CD8-positive, alpha-beta T cell (primary cell): ENCODE measurements at regions of chr3 and their contacts with region 1.

Region 1: DNA sequence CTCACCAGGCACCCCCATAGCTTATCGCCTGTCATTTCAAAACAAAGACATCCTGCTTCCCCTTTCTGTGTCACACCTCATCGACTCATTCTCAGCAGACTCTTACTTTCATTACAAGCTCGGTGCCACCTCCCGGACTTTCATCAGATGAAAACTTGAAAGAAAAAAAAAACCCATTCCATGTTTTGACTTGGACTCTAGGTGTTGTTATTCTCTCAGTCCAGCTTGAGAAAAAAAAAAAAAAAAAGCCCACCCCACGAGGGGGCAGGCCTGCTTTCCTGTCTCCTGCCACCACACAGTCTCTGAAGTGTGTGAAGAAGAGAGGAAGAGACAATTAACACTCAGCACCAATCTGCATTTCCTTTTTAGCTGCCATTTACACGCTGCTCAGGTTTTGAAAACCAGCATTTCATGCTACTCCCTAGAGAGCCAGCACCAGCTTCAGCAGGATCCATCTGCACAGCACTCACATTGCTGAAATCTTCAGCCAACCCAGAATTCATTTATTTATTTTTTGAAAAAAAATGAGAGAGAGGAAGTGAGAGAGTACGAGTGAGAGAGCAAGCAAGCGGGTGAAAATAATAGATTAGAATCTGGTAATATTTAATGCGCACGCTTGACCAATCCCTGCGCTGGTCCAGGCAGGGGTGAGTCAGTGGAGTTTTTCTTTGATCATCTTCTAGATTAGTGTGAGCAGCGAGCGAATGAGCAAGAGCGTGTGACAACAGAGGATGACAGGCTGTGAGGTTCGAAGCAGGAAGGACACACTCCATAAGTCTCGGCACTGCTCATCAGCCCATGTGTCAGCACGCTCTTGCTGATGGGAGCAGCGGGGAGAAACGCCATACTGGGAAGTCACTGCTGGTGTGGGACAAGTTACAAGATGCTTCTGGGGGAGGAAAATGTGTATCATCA is 23.5 kb downstream of the ZNF80 start:
- DNase-seq: peak; percentile 35 to 92 (median 74)
- ATAC-seq: peak; percentile 45
- H3K4me3 ChIP-seq: peak overlapping the region; percentile 55
- H3K4me3 Mint-ChIP-seq: no peak overlapping the region
- H3K27ac ChIP-seq: peak overlapping the region; percentile 91 to 96
- H3K27ac Mint-ChIP-seq: no peak overlapping the region
- H3K4me1 ChIP-seq: peaks cover 60% of the 10 kb centered on the region
- H3K4me1 Mint-ChIP-seq: peaks cover 3% of the 10 kb centered on the region
- H3K27me3 ChIP-seq: no peaks in the 10 kb centered on the region
- H3K27me3 Mint-ChIP-seq: no peaks in the 10 kb centered on the region
- CTCF ChIP-seq: peak; percentile 38

Region 2: GRCh38 chr3:113696658-113697499 is 517.0 kb before region 1 on chr3:
- CTCF ChIA-PET with region 1: no interaction called
- POLR2A ChIA-PET with region 1: no interaction called
- intact Hi-C with region 1: loop called in 1 of 2 experiments (anchors 2 kb)
- DNase-seq: peak; percentile 96 to 100 (median 99)
- ATAC-seq: peak; percentile 84
- H3K4me3 ChIP-seq: peak overlapping the region; percentile 69 to 86
- H3K4me3 Mint-ChIP-seq: no peak overlapping the region
- H3K27ac ChIP-seq: peak overlapping the region; percentile 88 to 89
- H3K27ac Mint-ChIP-seq: no peak overlapping the region
- H3K4me1 ChIP-seq: peaks cover 32% of the 10 kb centered on the region
- H3K4me1 Mint-ChIP-seq: peaks cover 28% of the 10 kb centered on the region
- H3K27me3 ChIP-seq: no peaks in the 10 kb centered on the region
- H3K27me3 Mint-ChIP-seq: no peaks in the 10 kb centered on the region
- CTCF ChIP-seq: no peak

Region 3: DNA sequence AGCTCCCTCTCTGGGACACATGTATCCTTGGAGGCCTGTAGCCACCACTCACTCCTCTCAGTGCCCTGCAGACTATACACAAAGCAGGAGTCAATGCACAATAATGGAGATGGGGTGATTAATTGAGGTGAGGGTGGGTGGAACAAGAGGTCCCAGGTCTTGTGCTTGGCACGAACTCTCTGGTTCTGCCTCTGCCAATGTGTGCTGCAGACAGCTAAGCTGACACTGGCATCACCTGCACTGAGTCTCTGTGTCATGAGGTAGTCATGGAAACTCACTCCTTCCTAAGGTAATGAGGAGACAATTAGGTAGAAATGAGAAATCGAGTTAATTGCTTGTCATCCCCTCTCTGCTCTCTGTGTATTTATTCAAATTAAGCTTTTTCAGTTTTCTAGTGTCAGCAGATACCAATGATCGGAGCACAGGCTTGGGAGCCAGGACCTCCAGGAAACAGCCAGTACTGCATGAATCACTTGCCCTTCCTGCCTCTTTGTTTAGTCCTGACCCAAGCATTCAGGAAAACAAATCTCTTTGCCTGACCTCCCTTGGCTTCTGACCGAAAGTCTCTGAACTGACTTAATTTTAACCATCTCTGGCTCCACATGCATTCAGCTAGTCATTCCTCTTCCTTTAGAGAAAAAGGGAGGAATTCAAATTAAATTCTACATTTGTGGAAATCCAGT is 91.7 kb before region 1 on chr3:
- CTCF ChIA-PET with region 1: no interaction called
- POLR2A ChIA-PET with region 1: no interaction called
- intact Hi-C with region 1: no loop called
- DNase-seq: no peak
- ATAC-seq: no peak
- H3K4me3 ChIP-seq: no peak overlapping the region
- H3K4me3 Mint-ChIP-seq: no peak overlapping the region
- H3K27ac ChIP-seq: no peak overlapping the region
- H3K27ac Mint-ChIP-seq: no peak overlapping the region
- H3K4me1 ChIP-seq: no peaks in the 10 kb centered on the region
- H3K4me1 Mint-ChIP-seq: no peaks in the 10 kb centered on the region
- H3K27me3 ChIP-seq: no peaks in the 10 kb centered on the region
- H3K27me3 Mint-ChIP-seq: peaks cover 5% of the 10 kb centered on the region
- CTCF ChIP-seq: no peak

Region 4: GRCh38 chr3:114152519-114153151 is 61.2 kb before region 1 on chr3:
- CTCF ChIA-PET with region 1: interaction called, 13 read pairs
- POLR2A ChIA-PET with region 1: interaction called, 5 read pairs
- intact Hi-C with region 1: loop called (anchors 1 to 2 kb)
- DNase-seq: peak; percentile 76 to 91 (median 87)
- ATAC-seq: peak; percentile 100
- H3K4me3 ChIP-seq: peak overlapping the region; percentile 46 to 50
- H3K4me3 Mint-ChIP-seq: peak overlapping the region; percentile 73
- H3K27ac ChIP-seq: peak overlapping the region in 1 of 2 experiments; percentile 47
- H3K27ac Mint-ChIP-seq: no peak overlapping the region
- H3K4me1 ChIP-seq: peaks cover 8% of the 10 kb centered on the region
- H3K4me1 Mint-ChIP-seq: peaks cover 10% of the 10 kb centered on the region
- H3K27me3 ChIP-seq: no peaks in the 10 kb centered on the region
- H3K27me3 Mint-ChIP-seq: no peaks in the 10 kb centered on the region
- CTCF ChIP-seq: peak; percentile 99

Region 5: DNA sequence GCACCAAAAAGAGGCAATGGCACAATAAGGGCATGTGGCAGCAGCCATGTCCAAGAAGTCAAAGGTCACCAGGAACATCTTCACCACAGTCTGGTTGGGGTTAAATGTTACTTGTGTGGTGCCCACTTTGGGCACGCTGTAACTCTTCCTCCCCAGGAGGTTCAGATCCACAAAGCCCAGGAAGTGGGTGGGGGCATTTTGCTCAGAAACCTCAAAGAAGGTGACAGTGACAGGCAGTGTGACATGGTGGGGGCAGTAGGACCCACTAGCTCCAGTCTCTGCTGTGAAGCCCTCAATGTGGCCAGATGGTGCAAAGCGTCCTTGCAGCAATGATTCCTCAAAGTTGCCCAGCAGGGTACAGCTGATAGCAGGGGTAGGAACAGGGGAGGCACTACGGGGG is 17.7 kb after region 1 on chr3:
- CTCF ChIA-PET with region 1: interaction called, 16 read pairs
- POLR2A ChIA-PET with region 1: interaction called, 111 read pairs
- intact Hi-C with region 1: loop called (anchors 2 kb)
- DNase-seq: peak in 8 of 9 experiments; percentile 15 to 88 (median 70)
- ATAC-seq: peak; percentile 88
- H3K4me3 ChIP-seq: peak overlapping the region in 1 of 2 experiments; percentile 38
- H3K4me3 Mint-ChIP-seq: peak overlapping the region; percentile 65
- H3K27ac ChIP-seq: peak overlapping the region; percentile 58 to 85
- H3K27ac Mint-ChIP-seq: peak overlapping the region; percentile 96
- H3K4me1 ChIP-seq: peaks cover 89% of the 10 kb centered on the region
- H3K4me1 Mint-ChIP-seq: peaks cover 91% of the 10 kb centered on the region
- H3K27me3 ChIP-seq: no peaks in the 10 kb centered on the region
- H3K27me3 Mint-ChIP-seq: no peaks in the 10 kb centered on the region
- CTCF ChIP-seq: no peak

Region 6: GRCh38 chr3:114285648-114286230 is 71.9 kb after region 1 on chr3:
- CTCF ChIA-PET with region 1: interaction called, 29 read pairs
- POLR2A ChIA-PET with region 1: interaction called, 112 read pairs
- intact Hi-C with region 1: no loop called
- DNase-seq: peak in 2 of 9 experiments; percentile 40 to 61
- ATAC-seq: peak; percentile 74
- H3K4me3 ChIP-seq: peak overlapping the region in 1 of 2 experiments; percentile 1
- H3K4me3 Mint-ChIP-seq: peak overlapping the region; percentile 57
- H3K27ac ChIP-seq: peak overlapping the region; percentile 42 to 78
- H3K27ac Mint-ChIP-seq: peak overlapping the region; percentile 91
- H3K4me1 ChIP-seq: peaks cover 12% of the 10 kb centered on the region
- H3K4me1 Mint-ChIP-seq: peaks cover 23% of the 10 kb centered on the region
- H3K27me3 ChIP-seq: no peaks in the 10 kb centered on the region
- H3K27me3 Mint-ChIP-seq: no peaks in the 10 kb centered on the region
- CTCF ChIP-seq: no peak

Region 7: GRCh38 chr3:114299421-114299820 is 85.5 kb after region 1 on chr3:
- CTCF ChIA-PET with region 1: interaction called, 23 read pairs
- POLR2A ChIA-PET with region 1: interaction called, 112 read pairs
- intact Hi-C with region 1: no loop called
- DNase-seq: peak in 5 of 9 experiments; percentile 30 to 77 (median 46)
- ATAC-seq: peak; percentile 59
- H3K4me3 ChIP-seq: peak overlapping the region in 1 of 2 experiments; percentile 55
- H3K4me3 Mint-ChIP-seq: peak overlapping the region; percentile 72
- H3K27ac ChIP-seq: peak overlapping the region in 1 of 2 experiments; percentile 89
- H3K27ac Mint-ChIP-seq: peak overlapping the region; percentile 80
- H3K4me1 ChIP-seq: peaks cover 11% of the 10 kb centered on the region
- H3K4me1 Mint-ChIP-seq: peaks cover 45% of the 10 kb centered on the region
- H3K27me3 ChIP-seq: no peaks in the 10 kb centered on the region
- H3K27me3 Mint-ChIP-seq: no peaks in the 10 kb centered on the region
- CTCF ChIP-seq: peak; percentile 38